ENCODE measurements at regions of chr21 and their contacts with region 1.

Region 1: GRCh38 chr21:35643176-35643575 is 417.1 kb downstream of the SETD4 start:
- DNase-seq: peak; percentile 65
- H3K4me3 ChIP-seq: no peak overlapping the region
- H3K27ac ChIP-seq: peak overlapping the region; percentile 39
- H3K4me1 ChIP-seq: peaks cover 4% of the 10 kb centered on the region
- H3K27me3 ChIP-seq: no peaks in the 10 kb centered on the region
- CTCF ChIP-seq: no peak
- POLR2A ChIP-seq: no peak

Region 2: DNA sequence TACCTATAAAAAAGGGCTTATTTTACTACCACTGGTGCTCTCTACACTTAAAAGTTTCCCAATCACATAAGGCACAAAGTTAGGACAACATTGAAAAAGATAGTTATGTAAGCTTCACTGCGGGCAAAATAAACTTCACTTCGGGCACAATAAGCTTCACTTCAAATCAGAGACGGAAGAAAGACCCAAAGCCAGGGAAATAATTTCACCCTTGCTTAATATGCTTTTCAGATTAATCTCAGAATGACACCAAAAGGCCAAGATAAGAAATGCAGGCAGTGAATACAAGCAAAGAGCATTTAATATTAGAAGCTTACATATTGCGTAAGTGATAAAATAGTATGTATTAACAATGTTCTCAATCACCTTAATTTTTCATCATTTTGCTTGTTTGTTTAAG is 27.1 kb before region 1 on chr21:
- CTCF ChIA-PET with region 1: interaction called, 4 read pairs
- POLR2A ChIA-PET with region 1: no interaction called
- dilution Hi-C with region 1: no loop called
- intact Hi-C with region 1: loop called (anchors 2 kb)
- DNase-seq: peak; percentile 58
- H3K4me3 ChIP-seq: no peak overlapping the region
- H3K27ac ChIP-seq: no peak overlapping the region
- H3K4me1 ChIP-seq: peaks cover 13% of the 10 kb centered on the region
- H3K27me3 ChIP-seq: no peaks in the 10 kb centered on the region
- CTCF ChIP-seq: peak; percentile 6 to 25
- POLR2A ChIP-seq: no peak

Region 3: DNA sequence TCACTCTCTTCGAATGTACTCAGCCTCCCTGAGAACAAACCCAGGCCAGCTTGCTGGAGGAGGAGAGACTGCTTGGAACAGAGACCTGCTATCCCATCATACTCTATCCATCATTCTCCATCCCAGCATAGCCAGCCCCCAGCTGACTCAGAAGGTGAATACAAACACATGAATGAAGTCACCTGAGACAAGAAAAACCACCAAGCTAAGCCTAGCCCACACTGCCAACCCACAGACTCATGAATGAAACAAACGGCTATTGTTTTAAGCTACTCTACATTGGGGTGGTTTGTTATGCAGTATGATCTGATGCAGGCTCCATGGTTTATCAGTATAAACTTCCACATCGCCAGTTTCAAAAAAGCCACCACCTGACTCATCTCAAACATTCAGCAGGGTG is 21.5 kb after region 1 on chr21:
- CTCF ChIA-PET with region 1: no interaction called
- POLR2A ChIA-PET with region 1: no interaction called
- dilution Hi-C with region 1: no loop called
- intact Hi-C with region 1: no loop called
- DNase-seq: no peak
- H3K4me3 ChIP-seq: no peak overlapping the region
- H3K27ac ChIP-seq: no peak overlapping the region
- H3K4me1 ChIP-seq: no peaks in the 10 kb centered on the region
- H3K27me3 ChIP-seq: peaks cover 19 to 29% of the 10 kb centered on the region in 2 experiments
- CTCF ChIP-seq: no peak
- POLR2A ChIP-seq: no peak

Region 4: GRCh38 chr21:35682904-35683549 is 39.9 kb after region 1 on chr21:
- CTCF ChIA-PET with region 1: no interaction called
- POLR2A ChIA-PET with region 1: no interaction called
- dilution Hi-C with region 1: no loop called
- intact Hi-C with region 1: no loop called
- DNase-seq: peak; percentile 71
- H3K4me3 ChIP-seq: no peak overlapping the region
- H3K27ac ChIP-seq: no peak overlapping the region
- H3K4me1 ChIP-seq: peaks cover 2% of the 10 kb centered on the region
- H3K27me3 ChIP-seq: peaks cover 52 to 66% of the 10 kb centered on the region in 2 experiments
- CTCF ChIP-seq: no peak
- POLR2A ChIP-seq: no peak

Region 5: DNA sequence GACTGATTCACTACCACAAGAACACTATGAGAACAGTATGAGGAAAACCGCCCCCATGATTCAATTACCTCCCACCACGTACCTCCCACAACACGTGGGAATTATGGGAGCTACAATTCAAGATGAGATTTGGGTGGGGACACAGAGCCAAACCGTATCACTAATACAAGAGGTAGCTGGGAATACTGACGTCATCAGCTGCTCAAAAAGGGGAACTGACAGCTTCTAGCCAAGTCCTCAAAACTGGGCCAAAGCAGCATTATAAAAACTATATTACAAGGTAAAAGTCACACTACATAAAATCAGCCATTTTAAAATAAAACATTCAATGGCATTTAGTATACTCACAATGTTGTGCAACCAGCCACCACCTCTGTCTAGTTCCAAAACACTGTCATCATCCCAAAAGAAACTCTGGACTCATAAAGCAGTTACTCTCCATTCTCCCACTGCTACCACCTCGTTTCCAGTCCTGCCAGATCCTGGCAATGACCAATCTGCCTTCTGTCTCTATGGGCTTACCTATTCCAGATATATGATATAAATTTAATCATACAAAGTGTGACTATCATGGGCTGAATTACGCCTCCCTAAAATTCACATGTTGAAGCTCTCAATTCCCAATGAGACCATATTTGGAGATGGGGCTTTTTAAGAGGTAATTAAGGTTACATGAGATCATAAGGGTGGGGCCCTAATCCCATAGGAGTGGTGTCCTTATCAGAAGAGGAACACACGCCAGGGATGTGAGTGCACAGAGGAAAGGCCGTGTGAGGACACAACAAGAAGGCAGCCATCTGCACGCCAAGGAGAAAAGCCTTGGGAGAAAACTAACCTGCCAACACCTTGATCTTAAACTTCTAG is 225.1 kb after region 1 on chr21:
- CTCF ChIA-PET with region 1: no interaction called
- POLR2A ChIA-PET with region 1: no interaction called
- dilution Hi-C with region 1: no loop called
- intact Hi-C with region 1: no loop called
- DNase-seq: no peak
- H3K4me3 ChIP-seq: no peak overlapping the region
- H3K27ac ChIP-seq: no peak overlapping the region
- H3K4me1 ChIP-seq: no peaks in the 10 kb centered on the region
- H3K27me3 ChIP-seq: peaks cover 9 to 11% of the 10 kb centered on the region in 2 experiments
- CTCF ChIP-seq: no peak
- POLR2A ChIP-seq: no peak

Region 6: GRCh38 chr21:36385233-36386030 is 742.3 kb after region 1 on chr21 and contains the start of gene CHAF1B:
- CTCF ChIA-PET with region 1: no interaction called
- POLR2A ChIA-PET with region 1: no interaction called
- dilution Hi-C with region 1: no loop called
- intact Hi-C with region 1: no loop called
- DNase-seq: peak; percentile 79
- H3K4me3 ChIP-seq: peak within 1 kb of the TSS; percentile 69 to 91 (median 82)
- H3K27ac ChIP-seq: peak within 1 kb of the TSS; percentile 39
- H3K4me1 ChIP-seq: peaks cover 7% of the 10 kb centered on the region
- H3K27me3 ChIP-seq: no peaks in the 10 kb centered on the region
- CTCF ChIP-seq: no peak
- POLR2A ChIP-seq: peak; percentile 71
- total RNA-seq, gene CHAF1B: 13.0 and 16.4 TPM in 2 replicates